Activated B cell treated with CpG ODN at 0.5 μM for 24 hours (primary cell): ENCODE measurements at regions of chr6 and their contacts with region 1.

Region 1: DNA sequence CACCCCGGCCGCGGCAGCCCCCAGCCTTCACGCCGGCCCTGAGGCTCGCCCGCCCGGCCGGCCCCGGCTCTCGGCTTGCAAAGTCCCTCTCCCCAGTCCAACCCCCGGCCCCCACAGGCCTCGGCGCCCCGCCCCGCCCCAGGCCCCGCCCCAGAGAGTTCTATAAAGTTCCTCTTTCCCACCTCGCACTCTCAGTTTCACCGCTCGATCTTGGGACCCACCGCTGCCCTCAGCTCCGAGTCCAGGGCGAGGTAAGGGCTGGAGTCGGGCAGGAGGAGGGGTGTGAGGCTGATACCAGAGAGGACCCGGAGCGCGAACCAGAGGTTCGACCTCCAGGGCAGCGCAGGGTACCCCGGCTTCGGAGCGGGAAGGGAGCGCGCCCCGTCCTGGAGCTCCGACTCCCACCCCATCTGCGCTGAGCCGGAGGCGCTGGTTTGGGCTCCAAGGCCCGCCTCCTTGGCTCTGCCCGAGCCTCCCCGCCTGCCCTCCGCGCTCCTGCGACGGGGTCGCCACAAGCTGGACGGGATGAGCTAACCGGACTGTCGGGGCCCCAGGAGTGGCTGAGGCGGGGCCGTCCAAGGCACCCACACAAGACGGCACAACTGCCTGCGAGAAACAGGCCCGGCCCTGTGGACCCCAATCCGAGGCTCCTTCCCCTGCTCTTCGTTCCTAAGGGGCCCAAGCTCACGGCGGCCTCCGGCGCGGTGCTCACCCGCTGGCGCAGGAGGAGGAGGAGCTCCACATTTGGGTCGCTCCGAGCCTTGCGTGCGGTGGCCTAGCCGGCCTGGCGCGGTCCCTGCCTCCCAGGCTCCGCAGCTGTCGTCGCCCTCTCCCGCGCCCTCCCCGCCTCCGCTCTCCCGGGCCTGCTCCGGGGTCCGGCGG is at the start of gene IRF4:
- DNase-seq: no peak
- ATAC-seq: peak; percentile 74
- H3K4me3 Mint-ChIP-seq: peak within 1 kb of the TSS; percentile 98
- H3K27ac Mint-ChIP-seq: peak within 1 kb of the TSS; percentile 94
- H3K4me1 Mint-ChIP-seq: peaks cover 51% of the 10 kb centered on the region
- H3K27me3 Mint-ChIP-seq: no peaks in the 10 kb centered on the region
- CTCF ChIP-seq: no peak
- total RNA-seq, gene IRF4: 417 and 426 TPM in 2 replicates

Region 2: DNA sequence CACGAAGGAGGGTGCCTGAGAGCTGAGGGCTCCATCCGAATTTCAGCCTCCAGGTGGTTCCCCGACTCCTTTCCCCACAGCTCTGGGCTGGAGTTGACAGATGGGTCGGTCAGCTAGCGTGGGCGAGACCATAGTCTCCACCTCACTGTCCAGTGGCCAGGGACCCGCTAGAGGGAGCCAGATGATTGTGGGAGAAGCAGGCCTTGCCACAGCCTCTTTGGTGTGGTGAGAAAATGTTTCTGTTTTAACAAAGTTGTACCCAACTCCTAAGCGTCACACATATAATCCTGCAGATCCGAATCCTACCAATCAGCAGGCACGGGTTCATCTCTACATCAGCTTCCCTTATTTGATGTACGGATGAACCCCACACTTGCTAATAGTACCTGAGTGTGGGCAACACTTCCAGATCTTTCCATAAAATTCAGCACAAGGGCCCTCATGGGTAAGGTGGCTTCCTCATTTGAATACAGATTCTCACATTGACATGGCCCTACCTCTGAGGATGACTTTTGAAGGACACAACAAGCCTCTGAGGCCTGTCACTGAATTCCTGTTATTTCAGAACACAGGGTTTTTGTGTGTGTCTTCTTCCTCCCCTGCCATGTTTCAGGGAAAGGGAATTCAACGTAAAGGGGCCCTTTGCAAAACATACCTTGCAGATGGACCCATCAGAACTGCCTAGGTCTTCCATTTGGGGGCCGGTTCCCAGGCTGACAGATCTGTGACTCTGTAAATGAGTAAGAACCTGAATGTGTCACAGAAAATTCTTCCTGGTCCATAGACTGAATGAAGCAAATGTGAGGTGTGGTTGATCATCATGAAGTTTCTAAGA is 202.8 kb before region 1 on chr6:
- CTCF ChIA-PET with region 1: interaction called, 10 read pairs
- POLR2A ChIA-PET with region 1: interaction called, 69 read pairs
- intact Hi-C with region 1: loop called (anchors 1 kb)
- DNase-seq: peak; percentile 63
- ATAC-seq: peak; percentile 69
- H3K4me3 Mint-ChIP-seq: peak overlapping the region; percentile 28
- H3K27ac Mint-ChIP-seq: peak overlapping the region; percentile 85
- H3K4me1 Mint-ChIP-seq: peaks cover 86% of the 10 kb centered on the region
- H3K27me3 Mint-ChIP-seq: no peaks in the 10 kb centered on the region
- CTCF ChIP-seq: no peak

Region 3: DNA sequence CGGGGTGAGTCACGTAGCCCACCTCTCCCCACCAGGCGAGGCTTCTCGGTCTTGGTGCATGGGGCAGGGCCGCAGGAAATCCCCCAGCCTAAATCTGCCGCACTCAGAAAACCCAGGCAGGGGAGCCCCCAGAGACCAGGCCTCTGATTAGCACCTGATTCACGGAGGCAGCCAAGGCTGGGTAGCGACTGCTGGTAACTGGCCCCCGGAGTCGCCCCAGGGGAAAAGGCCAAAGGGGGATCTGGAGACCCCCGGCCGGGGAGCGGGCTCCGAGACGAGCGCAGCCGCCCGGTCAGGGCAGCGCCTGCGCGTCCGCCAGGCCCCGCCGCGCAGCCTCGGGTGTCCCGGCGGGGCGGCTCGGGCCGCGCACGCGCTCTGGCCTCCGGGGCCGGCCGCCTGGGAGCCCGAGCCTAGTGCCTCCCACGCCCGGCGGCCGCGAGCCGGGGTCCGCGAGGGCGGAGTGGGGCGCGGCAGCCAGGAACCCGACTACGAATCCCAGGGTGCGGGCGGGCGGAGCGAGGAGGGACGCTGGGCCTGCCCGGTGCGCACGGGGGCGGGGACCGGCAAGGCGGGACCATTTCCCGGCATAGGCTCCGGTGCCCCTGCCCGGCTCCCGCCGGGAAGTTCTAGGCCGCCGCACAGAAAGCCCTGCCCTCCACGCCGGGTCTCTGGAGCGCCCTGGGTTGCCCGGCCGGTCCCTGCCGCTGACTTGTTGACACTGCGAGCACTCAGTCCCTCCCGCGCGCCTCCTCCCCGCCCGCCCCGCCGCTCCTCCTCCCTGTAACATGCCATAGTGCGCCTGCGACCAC is 99.9 kb before region 1 on chr6 and contains the start of gene DUSP22:
- CTCF ChIA-PET with region 1: interaction called, 7 read pairs
- POLR2A ChIA-PET with region 1: interaction called, 152 read pairs
- intact Hi-C with region 1: loop called (anchors 1 kb)
- DNase-seq: peak; percentile 95
- ATAC-seq: peak; percentile 63
- H3K4me3 Mint-ChIP-seq: peak within 1 kb of the TSS; percentile 97
- H3K27ac Mint-ChIP-seq: peak within 1 kb of the TSS; percentile 93
- H3K4me1 Mint-ChIP-seq: peaks cover 61% of the 10 kb centered on the region
- H3K27me3 Mint-ChIP-seq: no peaks in the 10 kb centered on the region
- CTCF ChIP-seq: no peak
- total RNA-seq, gene DUSP22: 137 and 153 TPM in 2 replicates

Region 4: GRCh38 chr6:328136-328670 is 63.6 kb before region 1 on chr6:
- CTCF ChIA-PET with region 1: interaction called, 3 read pairs
- POLR2A ChIA-PET with region 1: interaction called, 25 read pairs
- intact Hi-C with region 1: no loop called
- DNase-seq: peak; percentile 20
- ATAC-seq: peak; percentile 90
- H3K4me3 Mint-ChIP-seq: no peak overlapping the region
- H3K27ac Mint-ChIP-seq: no peak overlapping the region
- H3K4me1 Mint-ChIP-seq: peaks cover 8% of the 10 kb centered on the region
- H3K27me3 Mint-ChIP-seq: no peaks in the 10 kb centered on the region
- CTCF ChIP-seq: no peak

Region 5: DNA sequence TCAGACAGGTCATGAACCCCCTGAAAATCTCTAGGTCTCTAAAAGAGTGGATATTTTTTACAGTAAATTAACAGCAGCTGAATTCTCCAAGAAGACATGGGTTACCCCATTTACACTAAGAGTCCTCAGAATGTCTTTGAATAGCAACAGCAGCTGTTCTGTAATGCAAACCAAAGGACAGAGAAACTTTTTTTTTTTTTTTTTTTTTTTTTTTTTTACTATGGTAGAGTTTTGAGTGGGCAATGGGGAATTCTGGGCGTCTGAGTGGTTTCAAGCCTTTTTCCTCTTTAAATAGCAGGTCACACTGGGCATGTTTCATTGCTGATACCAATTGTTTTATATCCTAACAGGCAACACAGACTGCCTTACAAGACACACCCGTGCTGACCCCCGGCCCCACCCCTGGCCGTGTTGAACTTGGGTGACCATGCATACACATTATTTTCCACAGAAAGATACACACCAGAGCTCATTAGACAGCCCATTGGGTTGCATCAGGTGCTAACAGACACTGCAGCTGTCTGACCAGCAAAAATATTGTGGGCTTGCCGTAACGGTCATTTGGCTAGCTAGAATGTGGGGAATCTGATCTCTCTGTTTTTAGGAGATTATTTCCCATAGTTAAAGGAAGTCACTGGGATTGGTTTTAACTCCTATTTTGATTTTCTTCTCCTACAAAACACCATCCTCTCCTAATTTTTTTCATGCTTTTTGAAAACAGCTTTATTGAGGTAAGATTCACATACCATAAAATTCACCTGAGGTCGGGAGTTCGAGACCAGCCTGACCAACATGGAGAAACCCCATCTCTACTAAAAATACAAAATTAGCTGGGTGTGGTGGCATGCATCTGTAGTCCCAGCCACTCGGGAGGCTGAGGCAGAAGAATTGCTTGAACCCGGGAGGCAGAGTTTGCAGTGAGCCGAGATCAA is 26.9 kb before region 1 on chr6:
- CTCF ChIA-PET with region 1: interaction called, 3 read pairs
- POLR2A ChIA-PET with region 1: interaction called, 11 read pairs
- intact Hi-C with region 1: no loop called
- DNase-seq: no peak
- ATAC-seq: peak; percentile 76
- H3K4me3 Mint-ChIP-seq: peak overlapping the region; percentile 42
- H3K27ac Mint-ChIP-seq: peak overlapping the region; percentile 32
- H3K4me1 Mint-ChIP-seq: peaks cover 56% of the 10 kb centered on the region
- H3K27me3 Mint-ChIP-seq: peaks cover 2% of the 10 kb centered on the region
- CTCF ChIP-seq: no peak

Region 6: GRCh38 chr6:474453-475185 is 82.8 kb after region 1 on chr6:
- CTCF ChIA-PET with region 1: no interaction called
- POLR2A ChIA-PET with region 1: interaction called, 21 read pairs
- intact Hi-C with region 1: loop called (anchors 1 kb)
- DNase-seq: peak; percentile 40
- ATAC-seq: peak; percentile 66
- H3K4me3 Mint-ChIP-seq: peak overlapping the region; percentile 48
- H3K27ac Mint-ChIP-seq: peak overlapping the region; percentile 39
- H3K4me1 Mint-ChIP-seq: peaks cover 60% of the 10 kb centered on the region
- H3K27me3 Mint-ChIP-seq: peaks cover 2% of the 10 kb centered on the region
- CTCF ChIP-seq: no peak

Region 7: DNA sequence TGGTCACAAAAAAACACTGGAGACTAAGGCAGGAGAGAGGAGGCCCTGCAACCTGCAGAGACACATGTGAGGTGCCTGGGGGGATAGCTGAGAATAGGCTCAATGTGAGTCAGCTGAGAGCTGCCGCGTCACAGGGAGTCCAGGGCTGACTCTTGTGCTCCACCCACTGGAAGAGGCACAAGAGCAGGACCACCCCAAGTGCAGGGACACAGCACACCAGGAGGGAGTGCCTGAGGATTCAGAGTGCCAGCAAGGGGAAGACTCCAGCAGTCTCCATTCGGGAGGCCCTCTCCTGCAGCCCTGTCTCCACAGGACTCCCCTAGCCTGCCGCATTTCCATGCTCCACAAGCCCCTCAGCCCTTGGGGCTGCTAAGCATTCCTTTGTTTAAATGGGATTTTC is 159.6 kb after region 1 on chr6:
- CTCF ChIA-PET with region 1: interaction called, 3 read pairs
- POLR2A ChIA-PET with region 1: interaction called, 3 read pairs
- intact Hi-C with region 1: loop called (anchors 5 kb)
- DNase-seq: no peak
- ATAC-seq: peak; percentile 57
- H3K4me3 Mint-ChIP-seq: no peak overlapping the region
- H3K27ac Mint-ChIP-seq: no peak overlapping the region
- H3K4me1 Mint-ChIP-seq: no peaks in the 10 kb centered on the region
- H3K27me3 Mint-ChIP-seq: no peaks in the 10 kb centered on the region
- CTCF ChIP-seq: no peak